GM10248 (cell line): ENCODE measurements at regions of chr6 and their contacts with region 1.

Region 1: GRCh38 chr6:36985808-36986703 is at the start of gene MTCH1:
- DNase-seq: peak; percentile 98
- CTCF ChIP-seq: no peak

Region 2: DNA sequence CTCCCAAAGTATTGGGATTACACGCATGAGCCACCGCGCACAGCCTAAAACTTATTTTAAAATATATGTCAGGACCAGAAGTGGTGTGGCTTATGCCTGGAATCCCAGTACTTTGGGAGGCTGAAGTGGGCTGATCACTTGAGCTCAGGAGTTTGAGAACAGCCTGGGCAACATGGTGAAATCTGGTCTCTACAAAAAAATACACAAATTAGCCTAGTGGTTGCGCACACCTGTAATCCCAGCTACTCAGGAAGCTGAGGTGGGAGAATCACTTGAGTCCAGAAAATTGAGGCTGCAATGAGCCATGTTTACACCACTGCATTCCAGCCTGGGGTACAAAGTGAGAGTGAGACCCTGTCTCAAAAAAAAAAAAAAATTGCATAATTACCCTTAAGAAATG is 557.1 kb before region 1 on chr6:
- CTCF ChIA-PET with region 1: no interaction called
- POLR2A ChIA-PET with region 1: no interaction called
- DNase-seq: no peak
- CTCF ChIP-seq: peak; percentile 36

Region 3: DNA sequence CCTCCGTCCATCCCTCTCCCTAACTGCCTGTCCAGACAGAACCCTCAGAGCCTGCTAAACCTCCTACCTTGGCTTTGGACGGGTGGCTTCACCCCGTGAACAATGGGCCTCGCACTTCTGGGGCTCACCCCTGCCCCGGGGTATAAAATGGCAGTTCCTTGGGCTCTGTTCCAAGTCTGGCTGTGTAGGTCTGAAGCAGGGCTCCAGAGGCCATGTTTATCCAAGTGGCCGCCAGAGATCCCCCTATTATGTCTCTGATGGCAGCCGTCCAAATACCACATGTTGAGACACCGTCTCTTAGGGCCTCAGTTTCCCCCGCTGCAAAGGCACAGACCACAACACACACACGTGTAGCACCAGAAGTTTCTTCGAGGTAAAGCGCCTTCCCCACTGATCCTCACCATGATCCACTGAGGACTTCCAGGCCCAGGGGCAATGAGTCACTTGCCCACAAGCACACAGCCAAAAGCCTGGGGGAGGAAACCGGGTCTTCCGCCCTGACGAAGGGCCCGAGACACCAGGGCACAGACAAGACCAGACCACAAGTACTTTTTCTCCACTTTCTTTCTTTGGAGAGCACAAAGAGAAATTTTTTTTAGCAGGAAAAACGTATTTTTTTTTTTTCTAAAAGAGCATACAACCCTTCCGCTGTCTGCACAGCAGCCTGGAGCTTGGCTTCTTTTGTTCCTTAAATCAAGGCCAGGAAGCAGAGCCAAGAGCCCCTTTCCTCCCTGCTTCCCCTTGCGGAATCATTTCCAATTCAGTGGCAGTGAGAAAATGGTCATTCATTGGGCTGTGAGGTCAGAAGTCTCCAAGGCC is 158.6 kb before region 1 on chr6:
- CTCF ChIA-PET with region 1: no interaction called
- POLR2A ChIA-PET with region 1: no interaction called
- DNase-seq: no peak
- CTCF ChIP-seq: no peak

Region 4: DNA sequence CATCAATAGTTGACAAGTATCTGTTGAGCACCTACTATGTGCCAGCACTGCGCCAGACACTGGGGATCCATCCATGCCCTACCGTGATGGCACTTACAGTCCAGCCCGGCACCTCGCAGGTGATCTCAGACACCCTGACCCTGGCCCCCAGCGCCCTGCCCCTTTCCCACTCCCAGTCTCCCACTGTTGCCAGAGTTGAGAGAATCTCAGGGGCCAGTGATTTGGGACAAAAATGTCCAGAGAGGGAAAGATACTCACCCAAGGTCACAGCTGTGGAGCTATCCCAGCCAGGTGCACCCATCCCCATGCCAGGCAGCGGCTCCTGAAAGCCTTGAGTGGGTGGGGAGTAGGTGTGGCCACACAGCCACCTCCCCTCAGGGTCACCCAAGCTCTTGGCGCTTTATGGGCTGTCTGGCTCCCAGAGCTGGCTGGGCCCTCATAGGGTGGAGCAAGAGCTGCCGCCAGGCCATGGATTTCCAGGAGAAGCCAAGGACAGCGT is 28.2 kb before region 1 on chr6:
- CTCF ChIA-PET with region 1: no interaction called
- POLR2A ChIA-PET with region 1: no interaction called
- DNase-seq: no peak
- CTCF ChIP-seq: no peak

Region 5: DNA sequence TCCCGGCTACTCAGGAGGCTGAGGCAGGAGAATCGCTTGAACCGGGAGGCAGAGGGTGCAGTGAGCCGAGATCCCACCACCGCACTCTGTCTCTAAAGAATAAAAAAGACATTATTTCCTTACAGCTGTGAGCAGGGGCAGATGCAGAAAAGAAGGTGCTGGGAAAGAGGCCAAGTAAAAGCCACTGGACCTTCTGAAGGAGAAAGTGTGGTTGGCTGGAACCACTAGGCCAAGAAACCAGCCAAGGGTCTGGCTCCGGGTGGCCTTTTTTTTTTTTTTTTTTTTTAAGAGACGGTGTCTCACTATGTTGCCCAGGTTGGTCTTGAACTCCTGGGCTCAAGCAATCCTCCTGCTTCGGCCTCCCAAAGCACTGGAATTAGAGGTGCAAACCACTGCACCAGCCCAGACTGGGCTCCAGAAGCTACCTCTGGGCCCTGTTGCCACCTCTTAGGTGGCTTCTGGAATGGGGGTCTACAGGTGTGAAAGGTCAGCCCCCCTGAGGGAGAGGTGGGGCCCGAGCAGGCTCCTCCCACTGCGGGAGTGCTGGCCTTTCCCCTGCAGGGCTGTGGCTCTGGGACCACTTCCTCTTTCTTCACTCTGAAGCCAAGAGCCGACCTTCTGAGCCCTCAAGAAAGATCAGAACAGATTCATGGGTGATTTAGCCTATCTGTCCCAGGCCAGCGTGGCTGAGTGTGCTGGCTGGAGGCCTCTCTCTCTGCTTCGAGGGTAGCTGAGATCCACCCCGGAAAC is 19.2 kb after region 1 on chr6 and contains the start of gene FGD2:
- CTCF ChIA-PET with region 1: interaction called, 6 read pairs
- POLR2A ChIA-PET with region 1: interaction called, 10 read pairs
- DNase-seq: peak; percentile 92
- CTCF ChIP-seq: no peak